ENCODE measurements at regions of chr1 and their contacts with region 1.

Region 1: DNA sequence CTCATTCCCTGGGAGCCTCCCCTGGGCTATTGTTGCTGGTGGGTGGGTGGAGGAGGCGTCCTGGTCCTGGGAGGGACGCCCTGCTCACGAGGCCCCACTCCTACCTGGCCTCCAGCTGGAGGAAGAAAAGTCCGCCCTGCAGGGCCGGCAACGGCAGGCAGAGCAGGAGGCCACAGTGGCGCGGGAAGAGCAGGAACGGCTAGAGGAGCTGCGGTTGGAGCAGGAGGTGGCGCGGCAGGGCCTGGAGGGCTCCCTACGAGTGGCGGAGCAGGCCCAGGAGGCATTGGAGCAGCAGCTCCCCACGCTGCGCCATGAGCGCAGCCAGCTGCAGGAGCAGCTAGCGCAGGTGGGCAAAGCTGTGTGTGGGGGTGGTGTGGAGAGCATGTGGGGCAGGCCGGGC is 24.9 kb downstream of the CROCC start:
- DNase-seq: no peak
- H3K4me3 ChIP-seq: no peak overlapping the region
- H3K27me3 ChIP-seq: no peaks in the 10 kb centered on the region
- CTCF ChIP-seq: no peak

Region 2: GRCh38 chr1:16625497-16626408 is 320.9 kb before region 1 on chr1:
- CTCF ChIA-PET with region 1: interaction called, 25 read pairs
- POLR2A ChIA-PET with region 1: no interaction called
- DNase-seq: no peak
- H3K4me3 ChIP-seq: no peak overlapping the region
- H3K27me3 ChIP-seq: no peaks in the 10 kb centered on the region
- CTCF ChIP-seq: no peak

Region 3: DNA sequence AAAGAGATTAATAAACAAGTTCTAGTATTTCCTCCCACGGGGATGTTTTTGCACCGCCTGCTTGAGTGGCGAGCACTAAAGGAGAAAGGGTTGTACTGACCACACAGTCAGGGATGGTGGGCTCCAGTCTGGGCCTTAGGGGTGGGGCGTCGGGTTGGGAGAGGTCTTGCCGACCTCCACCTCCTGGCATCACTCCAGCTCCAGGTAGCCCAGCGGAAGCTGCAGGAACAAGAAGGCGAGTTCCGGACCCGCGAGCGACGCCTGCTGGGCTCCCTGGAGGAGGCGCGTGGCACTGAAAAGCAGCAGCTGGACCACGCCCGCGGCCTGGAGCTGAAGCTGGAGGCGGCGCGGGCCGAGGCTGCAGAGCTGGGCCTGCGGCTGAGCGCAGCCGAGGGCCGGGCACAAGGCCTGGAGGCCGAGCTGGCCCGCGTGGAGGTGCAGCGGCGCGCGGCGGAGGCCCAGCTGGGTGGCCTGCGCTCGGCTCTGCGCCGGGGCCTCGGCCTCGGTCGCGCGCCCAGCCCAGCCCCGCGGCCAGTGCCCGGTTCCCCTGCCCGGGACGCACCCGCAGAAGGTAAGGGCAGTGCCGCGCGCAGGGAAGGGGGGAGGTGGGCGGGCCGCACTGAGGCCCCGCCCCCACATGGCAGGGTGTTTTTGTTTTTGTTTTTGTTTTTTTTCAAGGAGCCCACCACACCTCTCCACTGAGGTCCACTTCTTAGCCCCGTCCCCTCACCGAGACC is 14.1 kb after region 1 on chr1:
- CTCF ChIA-PET with region 1: interaction called, 37 read pairs
- POLR2A ChIA-PET with region 1: interaction called, 3 read pairs
- DNase-seq: no peak
- H3K4me3 ChIP-seq: peak overlapping the region; percentile 25
- H3K27me3 ChIP-seq: no peaks in the 10 kb centered on the region
- CTCF ChIP-seq: peak; percentile 85

Region 4: GRCh38 chr1:17001760-17002523 is 55.3 kb after region 1 on chr1:
- CTCF ChIA-PET with region 1: interaction called, 12 read pairs
- POLR2A ChIA-PET with region 1: no interaction called
- DNase-seq: no peak
- H3K4me3 ChIP-seq: no peak overlapping the region
- H3K27me3 ChIP-seq: no peaks in the 10 kb centered on the region
- CTCF ChIP-seq: no peak

Region 5: DNA sequence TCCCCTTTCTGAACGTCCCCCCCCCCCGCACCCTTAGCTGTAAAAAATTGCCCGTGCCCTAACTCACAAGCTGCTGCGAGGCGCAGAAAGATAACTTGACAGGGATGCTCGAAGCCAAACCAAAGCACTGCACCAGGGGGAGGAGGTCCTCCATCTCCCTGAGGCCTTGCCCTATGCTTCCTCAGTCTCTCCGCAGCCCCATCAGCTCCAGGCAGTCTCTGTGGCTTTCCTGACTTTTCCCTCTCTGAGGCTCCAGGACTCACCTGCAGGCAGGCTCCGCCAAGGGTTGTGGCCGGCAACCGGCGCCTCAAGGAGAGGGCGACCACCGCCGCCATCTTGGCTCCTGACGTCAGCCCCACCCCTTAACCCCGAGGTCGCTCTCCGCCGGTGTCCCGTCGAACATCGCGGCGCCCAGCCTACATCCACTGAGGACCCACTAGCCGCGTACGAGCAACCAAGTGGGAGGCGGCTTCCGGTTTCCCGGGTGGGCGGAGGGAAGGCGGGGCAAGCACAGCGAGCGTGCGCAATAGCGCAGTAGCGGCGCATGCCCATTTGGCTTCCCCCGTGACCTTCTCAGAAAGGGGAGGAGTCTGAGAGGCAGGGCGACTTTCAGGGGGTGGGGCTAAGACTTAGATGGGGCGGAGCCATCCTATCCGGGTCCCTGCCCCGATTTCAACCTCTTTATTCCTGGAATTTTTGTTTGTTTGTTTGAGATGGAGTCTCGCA is 107.2 kb after region 1 on chr1 and contains the start of gene SDHB:
- CTCF ChIA-PET with region 1: interaction called, 81 read pairs
- POLR2A ChIA-PET with region 1: no interaction called
- DNase-seq: peak; percentile 93
- H3K4me3 ChIP-seq: peak within 1 kb of the TSS; percentile 98
- H3K27me3 ChIP-seq: no peaks in the 10 kb centered on the region; the same call in 1 of the 2 replicates
- CTCF ChIP-seq: no peak
- polyA plus RNA-seq, gene SDHB: 115 and 199 TPM in 2 replicates

Measured in BJ (cell line).